ENCODE measurements at regions of chr17 and their contacts with region 1.

Region 1: GRCh38 chr17:70767102-70767701 is 597.9 kb downstream of the KCNJ2 start:
- DNase-seq: no peak
- H3K4me3 ChIP-seq: no peak overlapping the region
- H3K27ac ChIP-seq: no peak overlapping the region
- H3K4me1 ChIP-seq: no peaks in the 10 kb centered on the region
- H3K27me3 ChIP-seq: no peaks in the 10 kb centered on the region
- CTCF ChIP-seq: peak; percentile 53 to 87 (median 69)
- POLR2A ChIP-seq: no peak

Region 2: GRCh38 chr17:71084219-71084618 is 317.0 kb after region 1 on chr17:
- intact Hi-C with region 1: loop called (anchors 10 kb)
- DNase-seq: peak; percentile 51 to 63
- H3K4me3 ChIP-seq: no peak overlapping the region
- H3K27ac ChIP-seq: no peak overlapping the region
- H3K4me1 ChIP-seq: no peaks in the 10 kb centered on the region
- H3K27me3 ChIP-seq: no peaks in the 10 kb centered on the region
- CTCF ChIP-seq: peak in 5 of 6 experiments; percentile 19 to 64 (median 52)
- POLR2A ChIP-seq: no peak